ENCODE measurements at regions of chr2 and their contacts with region 1.

Region 1: GRCh38 chr2:1246239-1246638 is 167.0 kb upstream of the TPO start:
- DNase-seq: no peak
- ATAC-seq: no peak
- H3K4me3 ChIP-seq: no peak overlapping the region
- H3K27ac ChIP-seq: peak overlapping the region; percentile 50
- H3K4me1 ChIP-seq: no peaks in the 10 kb centered on the region
- H3K27me3 ChIP-seq: peaks cover 0 to 6% (median 0%) of the 10 kb centered on the region in 3 donors
- CTCF ChIP-seq: no peak

Region 2: DNA sequence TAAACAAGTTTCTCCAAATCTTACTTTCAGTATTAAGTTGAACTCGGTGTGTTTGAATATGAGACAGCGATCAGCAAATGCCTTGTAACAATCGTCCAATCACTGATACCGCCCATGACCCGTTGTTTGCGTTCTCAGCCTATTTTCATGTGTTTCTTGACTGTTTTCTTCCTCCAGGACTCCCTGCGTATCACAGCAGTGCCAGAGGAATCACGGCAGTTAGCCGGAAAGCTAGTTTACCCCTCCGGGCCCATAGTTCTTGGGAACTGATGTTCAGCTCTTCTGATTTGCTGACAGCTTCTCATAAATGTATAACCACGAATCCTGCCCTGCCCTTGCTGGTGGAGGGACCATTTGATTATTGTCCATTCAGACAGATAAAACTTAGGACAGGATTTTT is 124.8 kb after region 1 on chr2:
- intact Hi-C with region 1: loop called in 1 of 2 experiments (anchors 10 kb)
- DNase-seq: no peak
- ATAC-seq: no peak
- H3K4me3 ChIP-seq: no peak overlapping the region
- H3K27ac ChIP-seq: no peak overlapping the region
- H3K4me1 ChIP-seq: no peaks in the 10 kb centered on the region
- H3K27me3 ChIP-seq: peaks cover 0 to 3% (median 0%) of the 10 kb centered on the region in 3 donors
- CTCF ChIP-seq: no peak